T-cell (primary cell): ENCODE measurements at regions of chr7 and their contacts with region 1.

Region 1: DNA sequence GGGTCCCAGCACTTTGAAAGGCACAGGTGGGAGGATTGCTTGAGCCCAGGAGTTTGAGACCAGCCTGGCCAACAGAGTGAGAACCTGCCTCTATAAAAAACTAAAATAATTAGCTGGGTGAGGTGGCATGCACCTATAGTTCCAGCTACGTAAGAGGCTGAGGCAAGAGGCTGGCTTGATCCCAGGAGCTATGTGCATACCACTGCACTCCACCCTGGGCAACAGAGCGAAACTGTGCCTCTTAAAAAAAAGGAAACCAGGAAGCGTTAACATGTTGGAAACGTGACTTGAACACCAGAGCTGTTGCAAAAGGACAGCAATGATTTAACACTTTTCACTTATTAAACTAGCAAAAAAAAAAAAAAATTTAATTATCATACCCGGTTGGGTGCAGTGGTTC is 12.6 kb downstream of the BAZ1B start:
- DNase-seq: no peak
- ATAC-seq: no peak
- H3K4me3 ChIP-seq: no peak overlapping the region
- H3K4me3 Mint-ChIP-seq: no peak overlapping the region
- H3K27ac ChIP-seq: no peak overlapping the region
- H3K27ac Mint-ChIP-seq: no peak overlapping the region
- H3K4me1 ChIP-seq: peaks cover 0 to 11% of the 10 kb centered on the region in 2 experiments
- H3K4me1 Mint-ChIP-seq: peaks cover 25 to 37% (median 27%) of the 10 kb centered on the region in 3 donors
- H3K27me3 ChIP-seq: no peaks in the 10 kb centered on the region
- H3K27me3 Mint-ChIP-seq: no peaks in the 10 kb centered on the region

Region 2: DNA sequence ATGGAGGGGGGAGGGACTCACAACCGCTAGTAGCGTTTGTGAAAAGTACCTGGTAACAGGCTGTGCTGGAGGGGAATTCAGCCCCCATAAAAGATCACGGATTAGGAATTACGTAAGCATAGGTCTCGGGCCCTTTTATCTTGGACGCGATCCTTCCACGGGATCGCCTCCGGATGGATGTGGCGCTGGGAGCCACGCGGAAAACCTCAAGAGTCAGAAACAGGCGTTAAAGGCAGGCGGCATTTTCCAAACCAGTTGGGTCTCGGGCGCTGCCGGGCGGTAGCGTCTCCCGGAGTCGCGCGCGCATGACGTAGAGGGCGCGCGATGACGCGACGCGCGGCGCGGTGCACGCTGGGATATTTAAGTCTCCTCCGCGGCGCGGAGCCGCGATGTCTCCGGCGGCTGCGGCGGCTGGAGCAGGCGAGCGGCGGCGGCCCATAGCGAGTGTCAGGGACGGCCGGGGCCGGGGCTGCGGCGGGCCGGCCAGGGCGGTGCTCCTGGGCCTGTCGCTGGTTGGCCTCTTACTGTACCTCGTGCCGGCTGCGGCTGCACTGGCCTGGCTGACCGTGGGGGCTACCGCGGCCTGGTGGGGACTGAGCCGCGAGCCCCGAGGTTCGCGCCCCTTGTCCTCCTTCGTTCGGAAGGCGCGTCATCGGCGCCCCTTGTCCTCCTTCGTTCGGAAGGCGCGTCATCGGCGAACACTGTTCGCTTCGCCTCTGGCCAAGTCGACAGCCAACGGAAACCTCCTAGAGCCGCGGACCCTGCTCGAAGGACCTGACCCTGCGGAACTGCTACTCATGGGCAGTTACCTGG is 584.5 kb before region 1 on chr7 and contains the start of gene POM121:
- CTCF ChIA-PET with region 1: no interaction called
- POLR2A ChIA-PET with region 1: no interaction called
- DNase-seq: peak; percentile 69 to 94 (median 81)
- ATAC-seq: peak; percentile 90 to 95 (median 95)
- H3K4me3 ChIP-seq: peak within 1 kb of the TSS; percentile 92 to 93
- H3K4me3 Mint-ChIP-seq: peak within 1 kb of the TSS; percentile 91 to 99 (median 99)
- H3K27ac ChIP-seq: peak within 1 kb of the TSS; percentile 95
- H3K27ac Mint-ChIP-seq: peak within 1 kb of the TSS; percentile 98 to 99
- H3K4me1 ChIP-seq: peaks cover 12 to 21% of the 10 kb centered on the region in 2 experiments
- H3K4me1 Mint-ChIP-seq: peaks cover 39 to 43% (median 41%) of the 10 kb centered on the region in 3 donors
- H3K27me3 ChIP-seq: no peaks in the 10 kb centered on the region
- H3K27me3 Mint-ChIP-seq: no peaks in the 10 kb centered on the region
- total RNA-seq, gene POM121: 58.4 to 68.6 (median 65.9) TPM

Region 3: DNA sequence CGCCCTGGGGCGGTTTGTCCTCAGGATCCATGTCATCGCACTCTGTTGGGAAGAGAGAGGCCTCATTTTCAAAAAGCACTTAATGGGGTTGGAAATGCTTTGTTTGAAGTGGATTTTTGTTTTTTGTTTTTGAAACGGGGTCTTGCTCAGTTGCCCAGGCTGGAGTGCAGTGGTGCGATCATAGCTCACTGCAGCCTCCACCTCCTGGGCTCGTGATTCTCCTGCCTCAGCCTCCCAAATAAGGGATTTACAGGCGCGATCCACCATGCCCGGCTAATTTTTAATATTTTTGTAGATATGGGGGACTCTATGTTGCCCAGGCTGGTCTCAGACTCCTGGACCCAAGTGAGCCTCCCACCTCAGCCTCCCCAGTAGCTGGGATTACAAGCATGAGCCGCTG is 180.8 kb before region 1 on chr7:
- CTCF ChIA-PET with region 1: no interaction called
- POLR2A ChIA-PET with region 1: no interaction called
- DNase-seq: no peak
- ATAC-seq: no peak
- H3K4me3 ChIP-seq: no peak overlapping the region
- H3K4me3 Mint-ChIP-seq: no peak overlapping the region
- H3K27ac ChIP-seq: no peak overlapping the region
- H3K27ac Mint-ChIP-seq: no peak overlapping the region
- H3K4me1 ChIP-seq: peaks cover 0 to 10% of the 10 kb centered on the region in 2 experiments
- H3K4me1 Mint-ChIP-seq: peaks cover 7 to 8% (median 7%) of the 10 kb centered on the region in 3 donors
- H3K27me3 ChIP-seq: peaks cover 0 to 5% of the 10 kb centered on the region in 2 experiments
- H3K27me3 Mint-ChIP-seq: peaks cover 0 to 3% of the 10 kb centered on the region in 2 donors

Region 4: DNA sequence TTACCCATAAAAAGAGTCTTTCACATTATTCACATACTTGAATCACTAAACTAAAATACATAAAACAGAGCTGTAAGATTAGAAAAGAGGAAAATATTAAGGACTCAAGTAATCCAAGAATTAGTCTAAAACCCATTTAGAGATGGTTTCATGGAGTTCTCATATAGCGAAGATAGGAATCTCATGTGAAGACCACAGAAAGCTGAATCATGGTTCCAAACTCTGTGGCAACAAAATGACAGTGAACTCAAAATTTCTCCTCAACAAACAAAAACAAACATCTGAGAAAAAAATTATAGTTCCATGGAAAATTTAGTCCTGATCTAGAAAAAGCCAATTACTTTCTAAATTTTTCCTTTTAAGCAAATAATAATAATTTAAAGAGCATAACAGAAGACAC is 22.0 kb before region 1 on chr7:
- CTCF ChIA-PET with region 1: no interaction called
- POLR2A ChIA-PET with region 1: no interaction called
- DNase-seq: no peak
- ATAC-seq: no peak
- H3K4me3 ChIP-seq: no peak overlapping the region
- H3K4me3 Mint-ChIP-seq: no peak overlapping the region
- H3K27ac ChIP-seq: no peak overlapping the region
- H3K27ac Mint-ChIP-seq: peak overlapping the region; percentile 8 to 28
- H3K4me1 ChIP-seq: peaks cover 0 to 3% of the 10 kb centered on the region in 2 experiments
- H3K4me1 Mint-ChIP-seq: peaks cover 11 to 15% (median 14%) of the 10 kb centered on the region in 3 donors
- H3K27me3 ChIP-seq: no peaks in the 10 kb centered on the region
- H3K27me3 Mint-ChIP-seq: no peaks in the 10 kb centered on the region

Region 5: DNA sequence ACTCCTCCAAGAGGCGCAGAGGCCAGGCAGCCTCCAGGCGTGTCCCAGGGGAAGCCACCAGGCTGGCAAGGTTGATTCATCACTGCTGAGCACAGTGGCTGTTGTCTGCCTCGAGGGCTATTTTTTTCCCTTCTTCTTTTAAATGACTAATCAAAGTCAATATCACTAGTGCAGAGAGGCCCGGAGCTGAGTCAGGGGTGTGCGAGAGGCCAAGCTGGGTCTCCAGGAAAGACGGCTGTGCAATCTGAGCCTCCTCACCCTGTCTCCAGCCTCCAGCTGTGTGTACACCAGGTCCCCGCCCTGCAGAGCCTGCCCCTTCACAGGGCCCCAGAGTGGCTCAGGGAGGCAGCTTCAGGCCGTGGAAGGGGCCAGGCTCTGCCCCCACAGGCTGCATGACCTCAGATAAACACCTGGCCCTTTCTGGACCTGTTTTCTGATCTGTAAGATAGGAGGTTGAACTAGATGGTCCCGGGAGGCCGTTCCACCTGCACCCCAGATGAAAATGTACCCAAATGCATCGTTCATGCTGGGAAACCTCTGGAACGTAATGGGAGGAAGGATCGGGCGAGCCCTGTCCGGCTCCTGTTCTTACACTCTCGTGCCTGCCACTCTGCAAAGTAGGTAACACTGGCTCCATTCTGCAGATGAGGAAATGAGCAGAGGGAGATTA is 206.3 kb after region 1 on chr7:
- CTCF ChIA-PET with region 1: no interaction called
- POLR2A ChIA-PET with region 1: interaction called in 1 of 2 experiments, 14 read pairs
- DNase-seq: no peak
- ATAC-seq: no peak
- H3K4me3 ChIP-seq: no peak overlapping the region
- H3K4me3 Mint-ChIP-seq: no peak overlapping the region
- H3K27ac ChIP-seq: no peak overlapping the region
- H3K27ac Mint-ChIP-seq: no peak overlapping the region
- H3K4me1 ChIP-seq: peaks cover 14 to 42% of the 10 kb centered on the region in 2 experiments
- H3K4me1 Mint-ChIP-seq: peaks cover 26 to 38% (median 30%) of the 10 kb centered on the region in 3 donors
- H3K27me3 ChIP-seq: peaks cover 3 to 29% of the 10 kb centered on the region in 2 experiments
- H3K27me3 Mint-ChIP-seq: peaks cover 2 to 5% of the 10 kb centered on the region in 2 donors